Sciatic nerve (tissue), 2 donors: ENCODE measurements at regions of chr4 and their contacts with region 1.

Region 1: DNA sequence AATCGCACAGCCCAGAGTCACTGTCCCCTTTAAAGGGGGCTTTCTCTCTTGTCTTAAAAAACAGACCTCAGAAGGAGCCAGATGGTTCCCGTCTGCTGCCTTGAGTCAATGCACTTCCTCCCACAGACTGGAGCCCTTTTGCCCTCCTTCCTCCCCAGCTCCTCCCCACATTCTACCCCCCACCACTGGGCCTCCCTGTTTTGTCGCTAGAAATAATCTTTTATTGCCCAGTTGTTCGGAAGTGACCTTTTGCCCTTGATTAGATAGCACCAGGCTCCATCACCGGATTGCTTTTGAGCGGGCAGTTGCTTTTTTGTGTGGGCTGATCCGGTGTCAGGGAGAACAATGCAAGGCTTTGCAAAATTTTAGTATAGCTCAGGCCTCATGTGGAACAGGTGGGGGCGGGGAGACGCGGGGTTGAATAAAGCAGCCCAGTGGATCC is 47.7 kb downstream of the SPRY1 start:
- DNase-seq: no peak
- ATAC-seq: peak; percentile 87

Region 2: DNA sequence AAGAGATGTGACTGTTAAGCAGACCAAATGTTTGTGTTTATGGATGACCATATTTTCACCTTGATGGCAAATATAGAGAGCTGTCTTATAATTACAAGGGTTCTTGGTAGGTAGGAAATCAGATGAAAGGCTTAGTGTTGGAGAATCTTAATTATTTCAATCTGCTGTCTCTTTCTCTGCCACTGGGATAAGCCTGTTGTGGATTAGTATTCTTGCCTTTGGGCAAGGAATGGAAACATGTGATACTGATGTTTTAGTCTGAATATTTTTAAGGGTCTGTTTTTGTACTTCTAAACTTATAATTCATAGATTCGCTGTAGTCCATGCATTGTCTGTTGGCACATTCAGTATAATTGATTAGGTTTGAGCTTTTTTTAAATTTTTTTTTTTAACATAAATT is 498.2 kb before region 1 on chr4:
- intact Hi-C with region 1: no loop called
- DNase-seq: no peak
- ATAC-seq: no peak

Region 3: DNA sequence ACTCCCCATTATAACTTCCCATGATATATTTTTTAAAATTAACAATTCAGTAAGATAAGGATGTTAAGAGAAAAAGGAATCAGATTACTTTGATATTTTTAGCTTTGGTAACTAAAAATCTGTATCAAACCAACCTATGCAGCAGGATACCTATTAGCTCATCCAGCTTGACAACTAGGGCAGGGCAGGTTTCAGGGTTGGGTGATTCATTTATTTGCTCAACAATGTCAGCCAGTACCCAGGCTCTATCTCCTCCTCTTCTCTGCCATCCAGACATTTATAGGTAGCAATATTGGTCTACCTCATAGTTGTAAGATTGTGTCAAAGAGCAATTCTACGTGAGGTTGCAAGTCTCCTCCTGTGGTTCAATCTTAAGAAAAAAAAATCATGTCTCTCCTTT is 846.4 kb after region 1 on chr4:
- intact Hi-C with region 1: loop called (anchors 5 kb)
- DNase-seq: no peak
- ATAC-seq: no peak